Calu3 (cell line): ENCODE measurements at regions of chr10 and their contacts with region 1.

Region 1: GRCh38 chr10:6401562-6402348 is 178.3 kb downstream of the PRKCQ start:
- DNase-seq: peak; percentile 78
- H3K4me3 Mint-ChIP-seq: peak overlapping the region; percentile 61
- H3K27ac Mint-ChIP-seq: peak overlapping the region; percentile 90
- H3K4me1 Mint-ChIP-seq: peaks cover 66% of the 10 kb centered on the region
- H3K27me3 Mint-ChIP-seq: no peaks in the 10 kb centered on the region
- CTCF ChIP-seq: peak; percentile 67

Region 2: GRCh38 chr10:5977471-5978229 is 424.1 kb before region 1 on chr10 and contains the start of gene IL15RA:
- CTCF ChIA-PET with region 1: no interaction called
- intact Hi-C with region 1: loop called (anchors 10 kb)
- DNase-seq: peak; percentile 92
- H3K4me3 Mint-ChIP-seq: peak within 1 kb of the TSS; percentile 84
- H3K27ac Mint-ChIP-seq: peak within 1 kb of the TSS; percentile 87
- H3K4me1 Mint-ChIP-seq: peaks cover 13% of the 10 kb centered on the region
- H3K27me3 Mint-ChIP-seq: no peaks in the 10 kb centered on the region
- CTCF ChIP-seq: no peak
- total RNA-seq, gene IL15RA: 28.6 and 42.4 TPM in 2 replicates

Region 3: DNA sequence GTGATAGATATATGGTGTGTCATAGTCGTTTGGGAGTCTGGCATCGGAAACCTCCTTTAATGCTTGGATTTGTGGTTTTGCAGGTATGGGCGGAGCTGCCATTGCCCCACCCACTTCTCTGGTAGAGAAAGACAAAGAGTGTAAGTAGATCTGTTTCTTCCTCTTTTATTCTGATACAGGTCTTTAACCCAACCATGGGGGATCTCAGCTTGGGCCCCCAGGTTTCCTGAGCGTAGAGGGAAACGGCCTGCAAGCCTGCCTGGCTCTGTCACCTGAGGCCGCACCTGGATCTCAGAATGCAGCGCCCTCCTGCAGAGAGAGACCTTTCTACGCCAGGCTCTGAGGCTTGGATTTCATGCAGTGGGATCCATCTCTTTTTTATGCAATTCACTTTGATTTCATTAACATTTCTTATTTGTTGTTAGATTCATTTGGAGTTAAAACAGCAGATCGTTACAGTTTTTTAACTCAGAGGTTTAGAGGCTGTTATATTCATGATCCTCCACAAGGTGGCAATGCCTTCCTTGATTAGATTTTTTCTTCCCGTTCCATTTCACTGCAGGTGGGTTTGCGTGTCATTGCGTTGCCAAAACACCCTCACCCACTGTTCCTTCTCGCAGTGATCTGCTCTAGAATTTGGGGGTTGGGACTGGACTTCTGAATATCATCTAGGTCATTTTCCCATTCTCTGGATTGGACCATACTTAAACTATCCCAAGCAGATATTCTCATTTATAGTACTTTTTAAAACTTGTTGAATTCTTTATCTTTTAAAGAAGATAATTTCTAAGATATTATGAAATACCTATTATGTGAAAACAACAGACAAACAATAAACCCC is 292.9 kb before region 1 on chr10:
- CTCF ChIA-PET with region 1: interaction called, 5 read pairs
- intact Hi-C with region 1: loop called (anchors 1 kb)
- DNase-seq: peak; percentile 27
- H3K4me3 Mint-ChIP-seq: no peak overlapping the region
- H3K27ac Mint-ChIP-seq: peak overlapping the region; percentile 60
- H3K4me1 Mint-ChIP-seq: peaks cover 14% of the 10 kb centered on the region
- H3K27me3 Mint-ChIP-seq: no peaks in the 10 kb centered on the region
- CTCF ChIP-seq: peak; percentile 42

Region 4: GRCh38 chr10:6239213-6239991 is 162.4 kb before region 1 on chr10:
- CTCF ChIA-PET with region 1: interaction called, 12 read pairs
- intact Hi-C with region 1: loop called (anchors 10 kb)
- DNase-seq: peak; percentile 80
- H3K4me3 Mint-ChIP-seq: peak overlapping the region; percentile 17
- H3K27ac Mint-ChIP-seq: peak overlapping the region; percentile 89
- H3K4me1 Mint-ChIP-seq: peaks cover 20% of the 10 kb centered on the region
- H3K27me3 Mint-ChIP-seq: no peaks in the 10 kb centered on the region
- CTCF ChIP-seq: no peak

Region 5: GRCh38 chr10:6300106-6300783 is 101.5 kb before region 1 on chr10:
- CTCF ChIA-PET with region 1: interaction called, 13 read pairs
- intact Hi-C with region 1: loop called (anchors 2 kb)
- DNase-seq: peak; percentile 37
- H3K4me3 Mint-ChIP-seq: peak overlapping the region; percentile 20
- H3K27ac Mint-ChIP-seq: peak overlapping the region; percentile 97
- H3K4me1 Mint-ChIP-seq: peaks cover 80% of the 10 kb centered on the region
- H3K27me3 Mint-ChIP-seq: no peaks in the 10 kb centered on the region
- CTCF ChIP-seq: no peak

Region 6: GRCh38 chr10:6385396-6386062 is 16.2 kb before region 1 on chr10:
- CTCF ChIA-PET with region 1: interaction called, 17 read pairs
- intact Hi-C with region 1: no loop called
- DNase-seq: no peak
- H3K4me3 Mint-ChIP-seq: no peak overlapping the region
- H3K27ac Mint-ChIP-seq: peak overlapping the region; percentile 45
- H3K4me1 Mint-ChIP-seq: peaks cover 72% of the 10 kb centered on the region
- H3K27me3 Mint-ChIP-seq: no peaks in the 10 kb centered on the region
- CTCF ChIP-seq: no peak